Caco-2 (cell line): ENCODE measurements at regions of chr20 and their contacts with region 1.

Region 1: DNA sequence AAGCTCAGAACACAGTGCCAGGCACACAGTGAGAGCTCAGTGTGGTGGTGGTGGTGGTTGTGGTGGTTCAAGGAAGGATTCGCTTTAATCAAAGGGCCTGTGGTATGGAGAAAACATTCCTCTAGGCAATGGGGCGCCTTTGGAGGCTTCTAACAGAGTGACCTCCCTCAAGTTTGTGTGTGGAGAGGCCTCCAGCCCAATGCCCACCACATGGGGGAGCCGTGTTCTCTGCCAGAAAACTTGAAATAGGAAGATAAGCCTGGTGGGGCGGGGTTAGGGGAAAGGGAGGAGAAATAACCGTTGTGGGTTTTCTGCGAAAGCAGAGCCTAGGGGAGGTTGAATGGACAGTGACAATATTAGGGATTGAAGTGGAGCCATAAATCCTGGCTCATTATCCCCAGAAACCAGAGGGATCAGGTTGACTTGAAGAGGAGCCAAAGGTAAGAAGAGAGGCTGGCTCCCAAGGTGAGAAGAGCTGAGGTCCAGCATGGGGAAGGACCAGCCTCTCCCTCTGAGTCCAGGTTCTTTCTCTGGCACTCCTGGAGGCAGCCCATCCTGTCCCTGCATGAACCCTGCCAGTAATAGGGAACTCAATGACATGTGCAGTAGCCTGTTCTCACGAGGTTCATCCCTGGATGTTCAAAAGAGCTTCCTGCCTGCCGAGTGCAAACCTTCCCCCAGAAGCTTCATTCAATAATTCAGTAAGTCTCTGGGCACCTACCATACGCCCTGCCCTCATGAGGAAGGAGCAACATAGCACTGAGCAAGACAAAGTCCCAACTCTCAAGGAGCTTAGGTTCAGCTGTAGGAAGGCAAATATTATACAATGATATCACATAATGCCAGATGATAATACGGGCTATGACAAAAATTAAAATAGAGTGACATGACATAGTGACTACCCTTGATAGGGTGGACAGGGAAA is 51.4 kb downstream of the TGM2 start:
- DNase-seq: peak; percentile 93
- H3K4me3 ChIP-seq: no peak overlapping the region
- H3K4me3 Mint-ChIP-seq: peak overlapping the region; percentile 8
- H3K27ac Mint-ChIP-seq: peak overlapping the region; percentile 34
- H3K4me1 ChIP-seq: peaks cover 76% of the 10 kb centered on the region
- H3K4me1 Mint-ChIP-seq: peaks cover 77% of the 10 kb centered on the region
- H3K27me3 ChIP-seq: no peaks in the 10 kb centered on the region
- H3K27me3 Mint-ChIP-seq: no peaks in the 10 kb centered on the region
- CTCF ChIP-seq: peak; percentile 80 to 93

Region 2: GRCh38 chr20:38094373-38094891 is 19.2 kb before region 1 on chr20:
- CTCF ChIA-PET with region 1: no interaction called
- POLR2A ChIA-PET with region 1: no interaction called
- intact Hi-C with region 1: no loop called
- DNase-seq: no peak
- H3K4me3 ChIP-seq: no peak overlapping the region
- H3K4me3 Mint-ChIP-seq: no peak overlapping the region
- H3K27ac Mint-ChIP-seq: peak overlapping the region; percentile 20
- H3K4me1 ChIP-seq: peaks cover 8% of the 10 kb centered on the region; the same call in 1 of the 2 replicates
- H3K4me1 Mint-ChIP-seq: peaks cover 8% of the 10 kb centered on the region
- H3K27me3 ChIP-seq: no peaks in the 10 kb centered on the region
- H3K27me3 Mint-ChIP-seq: no peaks in the 10 kb centered on the region
- CTCF ChIP-seq: no peak

Region 3: GRCh38 chr20:38134387-38135270 is 21.0 kb after region 1 on chr20:
- CTCF ChIA-PET with region 1: interaction called, 6 read pairs
- POLR2A ChIA-PET with region 1: interaction called, 6 read pairs
- intact Hi-C with region 1: loop called (anchors 2 kb)
- DNase-seq: peak; percentile 74 to 88
- H3K4me3 ChIP-seq: no peak overlapping the region
- H3K4me3 Mint-ChIP-seq: peak overlapping the region; percentile 0
- H3K27ac Mint-ChIP-seq: peak overlapping the region; percentile 51
- H3K4me1 ChIP-seq: peaks cover 53% of the 10 kb centered on the region
- H3K4me1 Mint-ChIP-seq: peaks cover 44% of the 10 kb centered on the region
- H3K27me3 ChIP-seq: no peaks in the 10 kb centered on the region
- H3K27me3 Mint-ChIP-seq: no peaks in the 10 kb centered on the region
- CTCF ChIP-seq: no peak

Region 4: DNA sequence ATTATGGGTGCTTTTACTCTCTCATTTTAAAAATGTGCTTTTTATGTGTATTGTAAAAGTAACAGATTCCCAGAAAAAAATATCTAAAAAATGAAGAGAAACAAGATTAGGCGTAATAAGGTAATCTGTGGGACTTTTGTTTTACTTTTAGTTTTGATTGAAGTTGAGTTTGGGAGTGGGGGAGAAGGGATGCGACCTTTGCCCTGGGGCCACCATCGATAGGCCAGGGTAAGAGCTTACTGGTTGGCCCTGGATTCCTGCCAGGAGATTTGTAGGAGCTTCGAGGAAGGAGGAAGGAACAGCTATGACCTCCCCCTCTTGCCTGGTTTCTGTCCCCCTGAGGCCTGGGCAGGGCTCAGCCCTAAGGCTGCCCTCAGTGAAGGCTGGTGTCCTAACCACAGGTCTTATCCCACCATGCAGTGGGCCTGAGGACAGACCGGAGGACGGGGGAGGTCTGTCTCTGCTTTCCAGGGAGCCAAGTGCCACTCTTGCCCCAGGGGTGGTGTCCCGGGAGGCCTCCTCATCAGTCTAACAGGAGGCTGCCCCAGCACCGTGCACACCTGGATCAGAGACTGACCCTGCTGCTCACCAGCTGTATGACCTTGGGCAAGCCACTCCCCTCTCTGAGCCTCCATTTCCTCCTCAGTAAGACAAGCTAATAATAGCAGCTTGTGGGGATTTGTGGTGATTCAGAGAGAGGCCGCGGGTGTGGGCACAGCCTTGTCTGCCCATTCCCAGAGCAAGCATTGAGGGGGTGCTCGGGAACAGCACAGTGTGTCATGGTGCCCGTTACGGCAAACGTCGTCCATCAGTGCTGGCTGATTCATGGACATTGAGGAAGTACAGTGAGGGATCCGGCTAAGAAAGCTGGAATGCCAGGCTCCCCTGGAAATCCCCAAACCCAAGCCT is 30.2 kb after region 1 on chr20:
- CTCF ChIA-PET with region 1: interaction called, 15 read pairs
- POLR2A ChIA-PET with region 1: interaction called, 10 read pairs
- intact Hi-C with region 1: loop called (anchors 1 kb)
- DNase-seq: peak; percentile 89 to 97
- H3K4me3 ChIP-seq: no peak overlapping the region
- H3K4me3 Mint-ChIP-seq: peak overlapping the region; percentile 56
- H3K27ac Mint-ChIP-seq: peak overlapping the region; percentile 96
- H3K4me1 ChIP-seq: peaks cover 66% of the 10 kb centered on the region
- H3K4me1 Mint-ChIP-seq: peaks cover 48% of the 10 kb centered on the region
- H3K27me3 ChIP-seq: no peaks in the 10 kb centered on the region
- H3K27me3 Mint-ChIP-seq: no peaks in the 10 kb centered on the region
- CTCF ChIP-seq: no peak